ENCODE measurements at regions of chr11 and their contacts with region 1.

Region 1: DNA sequence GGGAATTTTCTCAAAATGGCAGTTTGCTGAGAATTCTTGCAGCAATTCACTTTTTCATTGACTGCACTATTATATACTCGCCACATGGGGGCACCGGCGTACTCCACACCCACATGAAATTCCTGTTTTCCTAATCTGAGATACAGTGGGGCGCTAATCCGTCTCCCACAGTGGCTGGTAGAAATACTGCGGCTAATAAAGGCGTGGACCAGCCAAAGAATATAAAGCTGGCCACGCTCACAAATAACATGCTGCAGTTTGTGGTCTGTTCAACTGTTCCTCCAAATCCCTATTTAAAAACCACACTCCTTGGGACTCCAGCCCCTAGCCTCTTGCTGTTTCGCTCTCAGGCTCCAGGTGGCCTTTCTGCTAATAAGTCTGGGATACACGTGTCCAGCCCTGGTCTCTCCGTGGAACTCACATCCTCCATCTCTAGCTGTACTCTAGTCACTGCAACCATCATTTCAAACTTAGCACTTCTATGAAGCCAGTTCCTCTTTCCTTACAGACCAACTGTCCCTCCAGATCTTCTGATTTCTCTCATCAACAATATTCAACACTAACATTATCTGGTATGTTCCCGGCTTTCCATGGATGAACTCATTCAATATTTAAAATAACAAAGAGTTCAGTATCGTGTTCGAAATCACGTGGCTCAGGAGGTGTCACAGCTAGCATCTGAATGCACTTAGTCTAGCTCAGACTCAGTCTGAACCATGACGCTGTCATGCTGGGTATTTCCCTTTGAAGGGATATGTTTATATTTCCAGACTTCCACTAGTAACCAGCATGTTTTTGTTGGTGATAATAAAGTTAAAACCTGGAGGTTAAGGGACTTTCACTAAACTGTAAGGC is 22.0 kb downstream of the TBRG1 start:
- DNase-seq: peak; percentile 75
- H3K4me3 ChIP-seq: peak overlapping the region; percentile 4 to 42; a peak in 2 of 4 replicates
- H3K27ac ChIP-seq: peak overlapping the region in 1 of 2 experiments; percentile 86; a peak in 2 of 4 replicates
- H3K4me1 ChIP-seq: peaks cover 3 to 7% of the 10 kb centered on the region in 2 experiments; a peak in 1 of 4 replicates
- H3K27me3 ChIP-seq: no peaks in the 10 kb centered on the region
- CTCF ChIP-seq: peak; percentile 84
- EP300 ChIP-seq: no peak
- RAD21 ChIP-seq: peak; percentile 82

Region 2: DNA sequence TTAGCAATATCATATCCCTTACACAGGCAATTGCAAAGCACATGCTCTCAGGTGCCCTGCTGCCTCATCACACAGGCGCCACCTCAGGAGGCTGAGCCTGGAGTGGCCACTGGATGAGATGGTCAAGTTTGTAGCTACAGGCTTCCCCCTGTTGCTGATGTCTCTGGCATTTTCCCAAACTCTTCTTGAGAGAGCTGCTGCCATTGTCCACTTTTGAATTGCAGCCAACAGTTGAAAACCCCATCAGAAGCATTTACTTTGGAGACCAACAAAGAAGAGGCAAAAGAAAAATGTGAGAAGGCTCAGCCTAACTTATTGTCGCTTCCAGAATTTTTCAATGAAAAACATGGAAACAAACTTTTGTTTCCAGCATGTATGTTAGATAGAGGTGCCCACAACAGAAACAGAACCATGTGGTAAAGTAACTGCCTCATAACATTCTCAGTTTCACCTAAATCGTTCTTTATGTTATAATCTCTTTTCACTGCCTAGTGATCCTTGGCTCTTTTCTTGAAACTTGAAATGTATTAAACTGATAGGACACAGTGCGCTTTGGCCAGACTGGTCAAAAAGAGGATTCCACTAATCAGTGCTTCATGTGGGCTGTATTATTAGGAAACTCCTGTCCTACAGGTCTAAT is 151.5 kb before region 1 on chr11:
- CTCF ChIA-PET with region 1: no interaction called
- POLR2A ChIA-PET with region 1: no interaction called
- DNase-seq: no peak
- H3K4me3 ChIP-seq: no peak overlapping the region
- H3K27ac ChIP-seq: no peak overlapping the region
- H3K4me1 ChIP-seq: no peaks in the 10 kb centered on the region
- H3K27me3 ChIP-seq: no peaks in the 10 kb centered on the region; the same call in 1 of the 2 replicates
- CTCF ChIP-seq: no peak
- EP300 ChIP-seq: no peak
- RAD21 ChIP-seq: no peak

Region 3: GRCh38 chr11:124602193-124602592 is 42.5 kb before region 1 on chr11:
- CTCF ChIA-PET with region 1: no interaction called
- POLR2A ChIA-PET with region 1: no interaction called
- DNase-seq: no peak
- H3K4me3 ChIP-seq: no peak overlapping the region
- H3K27ac ChIP-seq: no peak overlapping the region
- H3K4me1 ChIP-seq: peaks cover 0 to 5% of the 10 kb centered on the region in 2 experiments; a peak in 1 of 4 replicates
- H3K27me3 ChIP-seq: peaks cover 4% of the 10 kb centered on the region; the same call in 1 of the 2 replicates
- CTCF ChIP-seq: no peak
- EP300 ChIP-seq: no peak
- RAD21 ChIP-seq: no peak

Region 4: DNA sequence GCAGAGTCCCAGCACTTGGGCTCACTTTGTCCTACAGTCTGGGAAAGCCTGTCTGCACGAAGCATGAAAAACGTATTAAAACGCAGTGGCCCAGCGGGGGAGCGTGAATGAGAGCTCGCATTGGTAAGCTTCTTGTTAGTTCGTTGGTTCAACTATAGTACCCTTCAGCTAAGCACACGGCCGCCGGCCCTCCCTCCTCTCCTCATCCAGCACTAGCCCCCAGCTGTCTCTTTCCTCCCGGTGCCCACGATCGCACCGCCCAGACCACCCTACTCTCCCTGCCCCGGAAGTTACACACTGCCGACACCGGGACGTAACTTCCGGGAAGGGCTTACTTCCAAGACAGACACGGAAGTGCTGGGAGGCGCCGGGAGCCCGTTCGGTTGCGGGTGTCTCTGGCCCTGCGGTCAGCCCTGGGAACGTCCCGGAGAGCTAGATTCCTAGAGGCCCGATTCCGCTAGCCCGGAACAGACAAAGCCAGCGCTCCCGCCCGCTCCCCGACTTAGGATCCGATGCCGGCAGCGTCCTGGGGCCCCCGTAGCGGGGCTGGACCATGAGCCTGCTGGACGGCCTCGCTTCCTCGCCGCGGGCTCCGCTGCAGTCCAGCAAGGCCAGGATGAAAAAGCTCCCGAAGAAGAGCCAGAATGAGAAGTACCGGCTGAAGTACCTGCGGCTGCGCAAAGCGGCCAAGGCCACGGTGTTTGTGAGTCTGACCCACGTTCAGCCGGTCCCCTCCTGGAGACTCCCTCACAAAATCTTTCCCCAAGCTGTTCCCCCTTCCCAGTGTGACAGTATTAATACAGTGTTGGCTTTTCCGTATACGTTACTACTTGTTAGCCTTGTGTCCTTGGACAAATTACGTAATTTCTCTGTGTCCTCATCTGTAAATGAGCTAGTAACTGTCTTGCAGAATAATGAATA is 21.9 kb before region 1 on chr11 and contains the start of gene TBRG1:
- CTCF ChIA-PET with region 1: interaction called, 13 read pairs
- POLR2A ChIA-PET with region 1: no interaction called
- DNase-seq: peak; percentile 96
- H3K4me3 ChIP-seq: peak within 1 kb of the TSS; percentile 95 to 98
- H3K27ac ChIP-seq: peak within 1 kb of the TSS; percentile 80 to 94
- H3K4me1 ChIP-seq: peaks cover 4 to 12% of the 10 kb centered on the region in 2 experiments; a peak in 3 of 4 replicates
- H3K27me3 ChIP-seq: peaks cover 17% of the 10 kb centered on the region; the same call in 1 of the 2 replicates
- CTCF ChIP-seq: no peak
- EP300 ChIP-seq: no peak
- RAD21 ChIP-seq: no peak
- polyA plus RNA-seq, gene TBRG1: 22.0 and 29.0 TPM in 2 replicates

Region 5: DNA sequence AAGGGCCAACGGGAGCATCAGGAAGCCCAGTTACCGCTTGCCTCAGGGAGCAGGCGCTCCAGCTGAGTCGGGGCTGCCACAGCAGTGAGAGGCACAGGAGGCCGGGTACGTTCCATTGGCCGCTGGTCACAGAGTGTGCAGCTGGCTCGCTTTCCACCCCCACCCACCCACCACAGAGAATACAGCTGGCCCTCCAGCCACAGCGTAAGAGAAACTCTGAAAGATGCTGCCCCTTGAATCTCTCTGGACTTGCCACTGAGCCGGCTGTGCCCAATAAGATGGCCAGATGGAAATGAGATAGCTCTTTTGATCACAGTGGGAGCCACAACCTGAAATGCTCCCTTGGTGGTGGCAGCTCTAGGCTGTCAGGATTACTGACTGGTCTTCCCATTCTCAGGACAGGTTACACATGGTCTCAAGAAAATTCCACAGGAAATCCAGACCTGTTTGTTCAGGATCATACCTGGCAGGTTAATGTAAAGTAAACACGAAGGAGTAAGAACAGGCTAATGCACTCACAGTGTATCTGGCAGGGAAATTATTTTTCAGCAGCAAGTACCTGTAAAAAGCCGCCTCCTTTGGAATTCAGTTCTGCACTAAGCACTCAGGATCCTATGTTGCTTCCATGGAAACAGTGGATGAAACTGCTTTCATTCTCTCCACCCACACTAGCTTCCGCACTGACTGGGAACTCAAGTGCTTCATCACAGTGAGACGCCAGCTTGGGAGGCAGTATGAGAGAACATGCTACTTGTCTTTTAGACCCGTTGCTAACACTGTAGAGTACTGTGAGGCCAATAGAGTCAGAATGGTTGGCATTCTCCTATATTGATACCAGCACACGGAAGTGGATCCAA is 12.3 kb after region 1 on chr11:
- CTCF ChIA-PET with region 1: interaction called, 15 read pairs
- POLR2A ChIA-PET with region 1: interaction called, 4 read pairs
- DNase-seq: peak; percentile 52
- H3K4me3 ChIP-seq: no peak overlapping the region
- H3K27ac ChIP-seq: no peak overlapping the region
- H3K4me1 ChIP-seq: peaks cover 4 to 5% of the 10 kb centered on the region in 2 experiments; a peak in 2 of 4 replicates
- H3K27me3 ChIP-seq: no peaks in the 10 kb centered on the region
- CTCF ChIP-seq: no peak
- EP300 ChIP-seq: no peak
- RAD21 ChIP-seq: no peak

Region 6: DNA sequence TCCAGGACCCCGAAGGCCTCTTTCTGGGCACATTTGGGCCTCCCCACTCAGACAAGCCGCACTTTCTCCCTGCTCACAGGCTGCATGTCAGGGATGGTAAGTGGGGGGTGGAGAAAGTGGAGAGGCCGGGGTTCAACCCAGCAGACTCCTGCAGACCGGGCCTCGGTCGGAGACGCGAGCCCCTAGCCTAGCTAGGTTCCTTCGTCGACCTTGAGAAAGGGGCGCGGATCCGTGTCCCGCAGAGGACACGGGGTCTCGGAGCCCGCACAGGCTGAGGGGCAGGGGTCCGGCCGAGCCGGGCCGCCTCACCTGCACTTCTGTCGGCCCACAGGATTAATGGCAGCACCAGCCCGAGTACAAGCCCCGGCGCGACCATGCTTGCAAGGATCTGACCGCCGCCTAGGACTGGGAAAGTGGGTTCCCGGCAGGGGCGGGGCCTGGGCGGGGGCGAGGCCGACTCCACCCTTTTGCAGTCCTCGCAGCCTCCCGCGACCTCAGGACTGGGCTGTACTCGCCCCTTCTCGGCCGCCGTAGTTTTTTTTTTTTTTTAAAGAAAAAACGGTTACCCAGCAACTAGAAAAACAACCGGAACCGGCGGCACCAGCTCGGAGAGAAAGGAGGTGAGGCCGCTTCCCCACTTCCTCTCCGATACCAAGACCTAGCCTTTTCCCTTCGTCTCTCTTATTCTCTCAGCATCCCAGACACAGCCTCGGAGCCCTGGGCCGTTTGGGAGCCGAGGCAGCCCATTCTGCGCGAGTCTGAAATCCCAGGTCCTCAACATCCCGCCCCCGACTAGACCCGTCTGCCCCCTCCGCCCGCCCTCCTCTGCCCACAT is 28.9 kb after region 1 on chr11 and contains the starts of genes SIAE and SPA17:
- CTCF ChIA-PET with region 1: interaction called, 23 read pairs
- POLR2A ChIA-PET with region 1: no interaction called
- DNase-seq: peak; percentile 97
- H3K4me3 ChIP-seq: peak within 1 kb of the TSS; percentile 87 to 89
- H3K27ac ChIP-seq: peak within 1 kb of the TSS; percentile 87 to 88
- H3K4me1 ChIP-seq: peaks cover 0 to 11% of the 10 kb centered on the region in 2 experiments; a peak in 1 of 4 replicates
- H3K27me3 ChIP-seq: no peaks in the 10 kb centered on the region
- CTCF ChIP-seq: no peak
- EP300 ChIP-seq: peak in 1 of 2 experiments; percentile 48; a peak in 1 of 4 replicates
- RAD21 ChIP-seq: no peak
- polyA plus RNA-seq, gene SIAE: 27.9 and 47.0 TPM in 2 replicates
- polyA plus RNA-seq, gene SPA17: 7.7 and 11.7 TPM in 2 replicates

Region 7: DNA sequence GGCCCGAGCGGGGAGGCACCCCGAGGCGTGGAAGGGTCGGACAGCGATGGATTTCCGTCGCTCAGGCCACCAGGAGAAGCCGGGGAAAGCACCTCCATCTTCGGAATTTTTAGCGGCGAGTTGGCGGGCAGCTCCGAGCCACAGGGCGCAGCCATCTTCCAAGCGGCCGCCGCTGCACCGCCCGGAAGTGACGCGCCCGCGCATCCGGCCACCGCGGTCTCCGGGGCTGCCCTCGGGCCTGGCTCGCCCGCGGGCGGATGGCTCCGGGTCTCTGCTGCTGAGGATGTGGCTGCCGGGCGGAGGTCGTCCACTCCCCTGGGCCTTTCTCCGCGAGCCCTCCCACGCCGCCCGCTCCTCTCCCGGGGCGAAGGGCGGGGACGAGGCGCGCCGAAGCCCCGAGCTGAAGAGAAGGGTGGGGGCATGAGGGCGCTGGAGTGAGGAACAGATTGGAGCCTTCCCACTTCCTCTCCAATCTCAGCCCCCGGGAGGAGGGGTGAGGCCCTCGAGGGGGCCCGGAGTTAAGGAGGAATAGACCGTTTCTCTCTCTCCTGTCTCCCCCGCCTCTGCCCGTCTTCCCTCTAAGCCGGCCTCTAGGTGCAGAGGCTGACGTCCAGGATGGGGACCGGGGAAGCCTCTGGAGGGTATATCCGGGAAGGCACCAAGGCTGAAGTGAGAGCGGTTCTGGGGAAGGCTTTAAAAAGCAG is 155.7 kb after region 1 on chr11 and contains the start of gene MSANTD2:
- CTCF ChIA-PET with region 1: interaction called, 20 read pairs
- POLR2A ChIA-PET with region 1: no interaction called
- DNase-seq: peak; percentile 93
- H3K4me3 ChIP-seq: peak within 1 kb of the TSS; percentile 68 to 70
- H3K27ac ChIP-seq: peak within 1 kb of the TSS; percentile 95 to 97
- H3K4me1 ChIP-seq: peaks cover 8 to 10% of the 10 kb centered on the region in 2 experiments; a peak in 3 of 4 replicates
- H3K27me3 ChIP-seq: no peaks in the 10 kb centered on the region
- CTCF ChIP-seq: no peak
- EP300 ChIP-seq: 0 out of 4 replicates have a peak, but pooled peaks of 1 of the 2 experiments have one; percentile 8
- RAD21 ChIP-seq: 0 out of 2 replicates have a peak, but pooled peaks have one; percentile 2
- polyA plus RNA-seq, gene MSANTD2: 6.4 and 8.5 TPM in 2 replicates

Measured in SK-N-SH (cell line).